ENCODE measurements at regions of chr9 and their contacts with region 1.

Region 1: GRCh38 chr9:93682232-93682968 is 106.0 kb downstream of the PHF2 start:
- DNase-seq: peak; percentile 81
- ATAC-seq: peak; percentile 73
- H3K4me3 Mint-ChIP-seq: no peak overlapping the region
- H3K27ac Mint-ChIP-seq: peak overlapping the region; percentile 37
- H3K4me1 Mint-ChIP-seq: no peaks in the 10 kb centered on the region
- H3K27me3 Mint-ChIP-seq: no peaks in the 10 kb centered on the region

Region 2: GRCh38 chr9:92501671-92502393 is 1180.6 kb before region 1 on chr9:
- CTCF ChIA-PET with region 1: no interaction called
- POLR2A ChIA-PET with region 1: no interaction called
- intact Hi-C with region 1: no loop called
- DNase-seq: peak; percentile 30
- ATAC-seq: peak; percentile 55
- H3K4me3 Mint-ChIP-seq: no peak overlapping the region
- H3K27ac Mint-ChIP-seq: no peak overlapping the region
- H3K4me1 Mint-ChIP-seq: no peaks in the 10 kb centered on the region
- H3K27me3 Mint-ChIP-seq: no peaks in the 10 kb centered on the region

Region 3: DNA sequence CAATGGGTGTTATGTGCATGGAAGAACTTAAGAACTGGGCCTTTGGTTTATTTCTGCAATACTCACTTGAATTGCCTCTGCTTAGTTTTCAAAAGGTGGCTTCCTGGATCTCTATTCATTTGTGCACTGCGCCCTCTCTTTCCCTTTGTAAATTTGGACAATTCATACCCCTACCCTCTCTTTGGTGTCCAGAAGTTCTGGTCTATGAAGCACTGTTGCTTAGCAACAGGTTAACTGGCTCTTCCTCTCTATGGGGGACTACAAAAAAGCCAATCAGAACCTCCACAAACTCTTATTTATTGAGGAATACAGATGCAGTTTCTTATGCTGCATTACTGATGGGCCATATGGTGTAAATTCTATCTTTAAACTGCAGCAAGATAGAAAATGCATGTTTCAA is 244.4 kb before region 1 on chr9:
- CTCF ChIA-PET with region 1: no interaction called
- POLR2A ChIA-PET with region 1: no interaction called
- intact Hi-C with region 1: no loop called
- DNase-seq: no peak
- ATAC-seq: no peak
- H3K4me3 Mint-ChIP-seq: no peak overlapping the region
- H3K27ac Mint-ChIP-seq: no peak overlapping the region
- H3K4me1 Mint-ChIP-seq: no peaks in the 10 kb centered on the region
- H3K27me3 Mint-ChIP-seq: no peaks in the 10 kb centered on the region

Region 4: GRCh38 chr9:93630806-93631411 is 51.5 kb before region 1 on chr9:
- CTCF ChIA-PET with region 1: no interaction called
- POLR2A ChIA-PET with region 1: no interaction called
- intact Hi-C with region 1: no loop called
- DNase-seq: no peak
- ATAC-seq: no peak
- H3K4me3 Mint-ChIP-seq: no peak overlapping the region
- H3K27ac Mint-ChIP-seq: no peak overlapping the region
- H3K4me1 Mint-ChIP-seq: peaks cover 4% of the 10 kb centered on the region
- H3K27me3 Mint-ChIP-seq: no peaks in the 10 kb centered on the region

Region 5: DNA sequence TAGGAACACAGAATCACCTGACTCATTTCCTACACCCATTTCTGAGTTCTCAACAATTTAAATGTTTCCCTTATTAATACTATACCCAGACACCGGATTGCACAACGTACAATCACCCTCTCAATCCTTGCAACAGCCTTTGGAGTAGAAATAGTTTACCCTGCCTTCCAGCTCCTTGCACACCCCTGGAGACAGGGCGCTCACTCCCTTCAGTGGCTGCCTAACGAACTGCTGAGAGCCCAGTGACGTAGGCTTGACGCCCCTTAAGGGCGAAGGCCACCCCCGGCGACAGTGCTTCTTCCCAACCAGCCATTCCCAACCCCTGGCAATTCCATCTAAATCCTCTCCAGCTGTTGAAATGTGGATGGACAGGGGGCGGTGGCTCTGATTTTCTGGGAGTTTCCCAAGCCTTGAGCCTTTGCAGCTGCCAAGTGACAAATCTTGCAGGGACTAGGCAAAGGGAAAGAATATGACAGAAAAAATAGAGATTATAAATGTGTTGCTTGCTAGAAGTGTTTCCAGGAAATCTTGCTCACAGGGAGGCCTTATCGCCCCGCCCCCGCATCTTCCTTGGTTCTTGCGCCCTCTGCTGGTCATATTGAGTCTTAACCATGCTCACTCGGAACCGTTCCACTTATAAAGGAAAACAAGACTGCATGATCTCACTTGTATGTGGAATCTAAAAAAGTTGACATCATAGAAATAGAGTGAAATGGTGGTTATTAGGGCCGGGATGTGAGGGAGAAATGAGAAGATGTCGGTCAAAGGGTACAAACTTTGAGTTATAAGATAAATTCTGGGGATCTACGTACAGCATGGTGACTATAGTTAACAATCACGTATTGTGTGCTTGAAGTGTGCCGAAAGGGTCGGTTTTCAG is 280.4 kb after region 1 on chr9:
- CTCF ChIA-PET with region 1: interaction called, 24 read pairs
- POLR2A ChIA-PET with region 1: no interaction called
- intact Hi-C with region 1: loop called (anchors 1 kb)
- DNase-seq: peak; percentile 90
- ATAC-seq: peak; percentile 76
- H3K4me3 Mint-ChIP-seq: no peak overlapping the region
- H3K27ac Mint-ChIP-seq: peak overlapping the region; percentile 65
- H3K4me1 Mint-ChIP-seq: peaks cover 26% of the 10 kb centered on the region
- H3K27me3 Mint-ChIP-seq: peaks cover 39% of the 10 kb centered on the region

Measured in activated CD4-positive, alpha-beta T cell treated with anti-CD3 and anti-CD28 coated beads for 36 hours (primary cell).